Caki2 (cell line): ENCODE measurements at regions of chr12 and their contacts with region 1.

Region 1: GRCh38 chr12:5083955-5084849 is 40.5 kb downstream of the KCNA5 start:
- DNase-seq: peak; percentile 84

Region 2: DNA sequence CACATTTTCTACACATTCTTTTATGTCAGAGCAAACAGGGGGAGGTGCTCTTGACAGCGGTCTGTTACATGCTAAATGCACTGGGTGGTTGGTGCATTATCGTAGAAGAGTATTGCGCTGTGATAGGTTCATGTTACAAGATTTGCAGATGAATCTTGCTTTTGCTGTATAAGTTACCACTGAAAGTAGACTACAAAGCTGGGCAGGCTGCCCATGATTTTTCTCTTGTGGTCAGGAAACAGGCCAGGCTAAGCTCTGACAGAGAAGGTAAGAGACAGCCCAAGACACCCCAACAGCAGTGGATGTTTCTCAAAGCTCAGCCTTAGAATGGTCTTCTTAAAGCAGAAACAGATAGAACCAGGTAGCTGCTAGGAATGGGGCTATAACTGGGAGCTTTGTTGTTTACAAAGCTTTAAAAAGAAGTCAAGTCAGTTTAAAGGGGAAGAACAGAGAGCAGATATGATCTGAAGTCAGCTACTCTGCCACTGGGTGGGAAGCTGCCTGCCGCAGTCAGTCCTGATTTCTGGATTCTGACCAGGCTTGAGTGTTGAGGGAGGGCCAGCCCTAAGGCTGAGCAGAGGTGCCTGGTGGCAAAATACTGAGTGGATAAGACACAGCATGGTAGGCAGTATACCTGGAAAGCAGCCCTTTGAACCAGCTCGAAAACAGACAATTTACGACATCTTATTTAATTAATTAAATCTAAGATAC is 165.1 kb before region 1 on chr12:
- in situ Hi-C with region 1: no loop called
- DNase-seq: no peak

Region 3: DNA sequence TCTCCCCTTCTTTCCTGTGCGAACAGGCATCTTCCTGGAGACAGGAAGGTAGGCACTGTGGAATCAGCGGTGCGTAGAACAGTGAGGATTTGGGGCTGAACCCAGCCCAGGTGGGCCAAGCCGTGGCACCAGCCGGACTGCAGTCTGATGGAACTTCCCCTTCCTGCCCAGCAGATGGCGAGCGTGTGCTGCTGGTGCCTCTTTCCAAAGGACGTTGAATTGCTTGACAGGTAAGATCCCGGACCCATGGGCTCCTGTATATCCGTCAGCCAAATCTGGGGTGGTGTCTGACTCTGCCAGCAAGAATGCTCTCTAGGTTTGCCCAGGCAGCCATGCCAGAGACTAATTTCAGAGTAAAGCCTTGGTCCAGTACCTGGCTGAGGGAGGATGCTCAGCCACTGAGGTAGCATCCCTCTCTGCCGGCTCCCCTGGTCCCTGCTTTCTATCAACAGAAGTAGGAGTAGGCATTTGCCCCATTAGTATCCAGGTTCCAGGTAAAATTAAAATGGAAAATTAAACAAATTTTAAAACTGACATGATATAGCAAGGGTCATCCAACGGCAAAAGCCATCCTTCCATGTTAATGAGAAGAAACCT is 61.6 kb before region 1 on chr12:
- in situ Hi-C with region 1: loop called (anchors 10 kb)
- DNase-seq: peak; percentile 57